K562 (cell line): ENCODE measurements at regions of chr13 and their contacts with region 1.

Region 1: GRCh38 chr13:100514788-100515409 is 73.7 kb downstream of the GGACT start:
- DNase-seq: peak; percentile 74 to 82 (median 80)
- ATAC-seq: peak; percentile 99
- H3K4me3 ChIP-seq: no peak overlapping the region
- H3K27ac ChIP-seq: no peak overlapping the region
- H3K4me1 ChIP-seq: no peaks in the 10 kb centered on the region
- H3K27me3 ChIP-seq: peaks cover 0 to 3% of the 10 kb centered on the region in 2 experiments; a peak in 1 of 5 replicates
- CTCF ChIP-seq: peak; percentile 83 to 86 (median 85)
- EP300 ChIP-seq: no peak
- POLR2A ChIP-seq: no peak
- RAD21 ChIP-seq: peak; percentile 82 to 88

Region 2: DNA sequence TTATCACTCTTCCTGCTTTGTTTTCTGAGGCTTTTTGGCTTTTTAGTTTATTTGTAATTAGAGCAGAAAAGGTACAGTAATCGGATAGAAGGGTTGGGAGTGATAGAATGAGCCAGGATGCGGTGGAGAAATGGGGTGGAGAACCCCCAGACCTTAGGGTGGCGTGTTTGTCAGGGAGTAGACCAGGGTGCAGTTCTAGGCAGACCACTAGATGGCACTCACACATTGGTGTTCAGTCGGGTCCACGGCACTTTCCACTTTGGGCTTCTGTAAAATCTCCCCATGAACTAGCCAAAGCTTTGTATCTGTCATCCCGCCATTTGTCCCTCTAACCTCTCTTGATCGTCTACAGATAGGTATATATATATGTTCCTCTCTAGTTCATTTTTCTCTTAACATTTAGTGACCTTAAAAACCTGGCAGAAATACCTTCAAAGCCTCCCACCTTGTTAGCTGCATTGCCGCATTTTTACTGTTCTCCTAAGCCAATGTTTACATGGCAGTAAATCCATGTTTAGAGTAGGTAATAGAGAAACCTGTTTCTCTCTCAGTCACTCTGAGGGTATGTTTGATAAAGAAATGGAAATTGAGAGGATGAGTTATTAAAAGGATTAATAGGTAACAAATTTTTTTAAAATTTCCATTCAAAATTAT is 858.7 kb before region 1 on chr13:
- CTCF ChIA-PET with region 1: interaction called, 3 read pairs
- POLR2A ChIA-PET with region 1: no interaction called
- in situ Hi-C with region 1: no loop called
- intact Hi-C with region 1: loop called (anchors 5 kb)
- DNase-seq: peak; percentile 63 to 73 (median 68)
- ATAC-seq: peak; percentile 94
- H3K4me3 ChIP-seq: no peak overlapping the region
- H3K27ac ChIP-seq: no peak overlapping the region
- H3K4me1 ChIP-seq: no peaks in the 10 kb centered on the region; a peak in 2 of 5 replicates
- H3K27me3 ChIP-seq: peaks cover 0 to 5% of the 10 kb centered on the region in 2 experiments; a peak in 1 of 5 replicates
- CTCF ChIP-seq: peak; percentile 79 to 88 (median 81)
- EP300 ChIP-seq: no peak
- POLR2A ChIP-seq: no peak
- RAD21 ChIP-seq: peak; percentile 62 to 81

Region 3: GRCh38 chr13:99900960-99901359 is 613.9 kb before region 1 on chr13:
- CTCF ChIA-PET with region 1: interaction called, 4 read pairs
- POLR2A ChIA-PET with region 1: no interaction called
- in situ Hi-C with region 1: loop called (anchors 10 kb)
- intact Hi-C with region 1: loop called (anchors 1 kb)
- DNase-seq: no peak
- ATAC-seq: no peak
- H3K4me3 ChIP-seq: no peak overlapping the region
- H3K27ac ChIP-seq: no peak overlapping the region
- H3K4me1 ChIP-seq: no peaks in the 10 kb centered on the region
- H3K27me3 ChIP-seq: peaks cover 8 to 29% of the 10 kb centered on the region in 2 experiments; a peak in 4 of 5 replicates
- CTCF ChIP-seq: no peak
- EP300 ChIP-seq: no peak
- POLR2A ChIP-seq: no peak
- RAD21 ChIP-seq: no peak

Region 4: GRCh38 chr13:99908140-99908803 is 606.6 kb before region 1 on chr13:
- CTCF ChIA-PET with region 1: no interaction called
- POLR2A ChIA-PET with region 1: no interaction called
- in situ Hi-C with region 1: loop called (anchors 10 kb)
- intact Hi-C with region 1: no loop called
- DNase-seq: no peak
- ATAC-seq: no peak
- H3K4me3 ChIP-seq: no peak overlapping the region
- H3K27ac ChIP-seq: no peak overlapping the region
- H3K4me1 ChIP-seq: no peaks in the 10 kb centered on the region; a peak in 1 of 5 replicates
- H3K27me3 ChIP-seq: peaks cover 0 to 4% of the 10 kb centered on the region in 2 experiments; a peak in 4 of 5 replicates
- CTCF ChIP-seq: no peak
- EP300 ChIP-seq: no peak
- POLR2A ChIP-seq: no peak
- RAD21 ChIP-seq: no peak

Region 5: GRCh38 chr13:99916366-99917103 is 598.4 kb before region 1 on chr13:
- CTCF ChIA-PET with region 1: interaction called, 22 read pairs
- POLR2A ChIA-PET with region 1: no interaction called
- in situ Hi-C with region 1: no loop called
- intact Hi-C with region 1: loop called (anchors 1 kb)
- DNase-seq: peak; percentile 53 to 61 (median 58)
- ATAC-seq: peak; percentile 94
- H3K4me3 ChIP-seq: no peak overlapping the region
- H3K27ac ChIP-seq: no peak overlapping the region
- H3K4me1 ChIP-seq: no peaks in the 10 kb centered on the region; a peak in 1 of 5 replicates
- H3K27me3 ChIP-seq: peaks cover 4 to 13% of the 10 kb centered on the region in 2 experiments; a peak in 4 of 5 replicates
- CTCF ChIP-seq: peak; percentile 80 to 100 (median 99)
- EP300 ChIP-seq: no peak
- POLR2A ChIP-seq: no peak
- RAD21 ChIP-seq: peak; percentile 87 to 91

Region 6: GRCh38 chr13:100039740-100040139 is 475.2 kb before region 1 on chr13:
- CTCF ChIA-PET with region 1: interaction called, 6 read pairs
- POLR2A ChIA-PET with region 1: no interaction called
- in situ Hi-C with region 1: no loop called
- intact Hi-C with region 1: loop called (anchors 10 kb)
- DNase-seq: no peak
- ATAC-seq: no peak
- H3K4me3 ChIP-seq: no peak overlapping the region
- H3K27ac ChIP-seq: no peak overlapping the region
- H3K4me1 ChIP-seq: no peaks in the 10 kb centered on the region
- H3K27me3 ChIP-seq: no peaks in the 10 kb centered on the region; a peak in 1 of 5 replicates
- CTCF ChIP-seq: no peak
- EP300 ChIP-seq: no peak
- POLR2A ChIP-seq: no peak
- RAD21 ChIP-seq: no peak

Region 7: GRCh38 chr13:100392709-100393641 is 121.9 kb before region 1 on chr13:
- CTCF ChIA-PET with region 1: no interaction called
- POLR2A ChIA-PET with region 1: no interaction called
- in situ Hi-C with region 1: no loop called
- intact Hi-C with region 1: loop called (anchors 5 kb)
- DNase-seq: peak; percentile 79 to 92 (median 81)
- ATAC-seq: peak; percentile 98
- H3K4me3 ChIP-seq: no peak overlapping the region
- H3K27ac ChIP-seq: peak overlapping the region; percentile 96
- H3K4me1 ChIP-seq: peaks cover 0 to 17% of the 10 kb centered on the region in 2 experiments; a peak in 2 of 5 replicates
- H3K27me3 ChIP-seq: no peaks in the 10 kb centered on the region
- CTCF ChIP-seq: no peak
- EP300 ChIP-seq: peak; percentile 72; the same call in 1 of the 2 replicates
- POLR2A ChIP-seq: peak; percentile 52
- RAD21 ChIP-seq: no peak